ENCODE measurements at regions of chr12 and their contacts with region 1.

Region 1: DNA sequence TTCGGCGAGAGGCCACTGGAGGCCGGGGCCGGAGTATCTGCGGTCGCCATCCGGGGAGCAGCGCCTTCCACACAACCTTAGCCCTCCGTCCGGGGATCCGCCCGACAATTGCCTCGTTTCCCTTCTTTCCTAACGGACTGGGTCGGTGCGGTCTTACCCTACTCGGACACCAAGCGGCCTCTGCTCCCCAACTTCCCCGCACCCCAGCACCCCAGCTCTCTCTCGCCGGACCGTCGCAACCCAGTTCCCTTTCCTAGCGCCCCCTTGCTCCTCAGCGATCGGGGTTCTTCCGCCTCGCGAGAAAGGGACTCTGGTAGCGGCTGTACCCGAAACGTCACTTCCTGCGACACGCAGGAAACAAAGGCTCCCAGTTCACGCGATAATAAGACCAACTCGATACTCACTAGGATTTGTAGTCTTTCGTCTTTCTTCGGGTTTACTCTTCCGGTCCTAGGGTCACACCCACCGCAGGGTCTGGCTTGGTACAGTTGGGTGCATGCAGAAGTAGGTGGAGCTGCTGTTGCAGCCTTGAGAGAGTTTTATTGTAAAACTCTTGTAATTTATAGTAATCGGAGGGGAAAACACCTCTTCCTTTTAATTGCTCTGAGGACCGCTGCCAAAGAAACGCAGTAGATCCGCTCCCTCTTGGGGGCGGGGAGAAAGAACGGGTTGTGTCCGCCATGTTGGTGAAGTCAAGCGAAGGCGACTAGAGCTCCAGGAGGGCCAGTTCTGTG is at the start of gene ZFC3H1:
- DNase-seq: peak; percentile 80
- ATAC-seq: peak; percentile 83
- H3K4me3 Mint-ChIP-seq: peak within 1 kb of the TSS; percentile 98
- H3K27ac Mint-ChIP-seq: peak within 1 kb of the TSS; percentile 98
- H3K4me1 Mint-ChIP-seq: peaks cover 55% of the 10 kb centered on the region
- H3K27me3 Mint-ChIP-seq: no peaks in the 10 kb centered on the region
- CTCF ChIP-seq: no peak
- total RNA-seq, gene ZFC3H1: 85.7 and 107 TPM in 2 replicates

Region 2: DNA sequence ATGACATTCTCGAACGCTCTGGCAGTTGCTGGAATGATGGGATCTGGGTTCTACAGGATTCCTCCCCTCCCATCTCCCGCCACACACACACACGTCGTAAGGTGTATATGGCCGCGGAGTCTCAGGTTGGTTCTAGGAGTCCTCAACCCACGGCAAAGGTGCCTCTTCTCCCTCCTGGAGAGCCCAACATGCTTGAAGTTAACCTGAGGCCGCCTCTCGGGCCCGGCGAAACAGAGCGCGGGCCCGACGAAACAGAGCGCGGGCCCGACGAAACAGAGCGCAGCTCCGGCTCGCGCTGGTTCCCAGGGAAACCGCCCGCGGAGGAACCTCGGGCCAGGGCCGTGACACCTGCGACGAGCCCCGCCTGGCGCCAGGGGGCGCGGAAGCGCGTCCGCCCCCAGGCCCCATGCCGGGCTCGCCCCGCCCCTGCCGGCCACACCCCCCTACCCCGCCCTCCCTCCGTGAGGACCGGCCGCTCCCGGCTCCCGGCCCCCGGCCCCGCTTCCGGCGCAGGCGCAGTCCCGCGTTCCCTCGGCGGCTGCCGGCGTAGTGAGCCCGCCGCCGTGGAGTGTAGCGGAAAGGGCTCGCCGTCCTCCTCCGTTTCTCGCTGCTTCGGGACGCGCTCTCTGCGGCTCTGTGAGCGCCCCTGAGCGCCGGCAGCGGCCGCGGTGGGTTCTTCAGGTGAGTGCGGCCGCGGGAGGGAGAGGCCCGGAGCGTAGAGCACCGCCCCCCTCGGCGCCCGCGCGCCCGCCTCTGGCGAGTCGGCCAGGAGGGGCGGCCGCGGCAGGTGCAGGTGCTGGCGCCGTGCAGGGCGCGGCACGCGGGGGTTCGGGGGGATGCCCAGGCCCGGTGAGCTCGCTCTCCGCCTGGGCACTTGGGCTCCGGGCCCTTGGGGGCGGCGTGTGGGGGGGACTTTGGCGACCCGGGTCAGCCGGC is 1925.1 kb before region 1 on chr12 and contains the start of gene RAB3IP:
- CTCF ChIA-PET with region 1: no interaction called
- POLR2A ChIA-PET with region 1: no interaction called
- intact Hi-C with region 1: loop called (anchors 1 kb)
- DNase-seq: peak; percentile 93
- ATAC-seq: peak; percentile 90
- H3K4me3 Mint-ChIP-seq: peak within 1 kb of the TSS; percentile 85
- H3K27ac Mint-ChIP-seq: peak within 1 kb of the TSS; percentile 73
- H3K4me1 Mint-ChIP-seq: peaks cover 19% of the 10 kb centered on the region
- H3K27me3 Mint-ChIP-seq: peaks cover 4% of the 10 kb centered on the region
- CTCF ChIP-seq: no peak
- total RNA-seq, gene RAB3IP: 34.6 and 37.9 TPM in 2 replicates

Region 3: GRCh38 chr12:71183018-71183417 is 480.7 kb before region 1 on chr12:
- CTCF ChIA-PET with region 1: no interaction called
- POLR2A ChIA-PET with region 1: no interaction called
- intact Hi-C with region 1: no loop called
- DNase-seq: no peak
- ATAC-seq: no peak
- H3K4me3 Mint-ChIP-seq: no peak overlapping the region
- H3K27ac Mint-ChIP-seq: no peak overlapping the region
- H3K4me1 Mint-ChIP-seq: no peaks in the 10 kb centered on the region
- H3K27me3 Mint-ChIP-seq: no peaks in the 10 kb centered on the region
- CTCF ChIP-seq: no peak

Region 4: GRCh38 chr12:71636704-71637115 is 27.0 kb before region 1 on chr12:
- CTCF ChIA-PET with region 1: interaction called, 12 read pairs
- POLR2A ChIA-PET with region 1: interaction called, 9 read pairs
- intact Hi-C with region 1: loop called (anchors 2 kb)
- DNase-seq: no peak
- ATAC-seq: peak; percentile 57
- H3K4me3 Mint-ChIP-seq: no peak overlapping the region
- H3K27ac Mint-ChIP-seq: peak overlapping the region; percentile 19
- H3K4me1 Mint-ChIP-seq: peaks cover 5% of the 10 kb centered on the region
- H3K27me3 Mint-ChIP-seq: no peaks in the 10 kb centered on the region
- CTCF ChIP-seq: peak; percentile 66

Region 5: DNA sequence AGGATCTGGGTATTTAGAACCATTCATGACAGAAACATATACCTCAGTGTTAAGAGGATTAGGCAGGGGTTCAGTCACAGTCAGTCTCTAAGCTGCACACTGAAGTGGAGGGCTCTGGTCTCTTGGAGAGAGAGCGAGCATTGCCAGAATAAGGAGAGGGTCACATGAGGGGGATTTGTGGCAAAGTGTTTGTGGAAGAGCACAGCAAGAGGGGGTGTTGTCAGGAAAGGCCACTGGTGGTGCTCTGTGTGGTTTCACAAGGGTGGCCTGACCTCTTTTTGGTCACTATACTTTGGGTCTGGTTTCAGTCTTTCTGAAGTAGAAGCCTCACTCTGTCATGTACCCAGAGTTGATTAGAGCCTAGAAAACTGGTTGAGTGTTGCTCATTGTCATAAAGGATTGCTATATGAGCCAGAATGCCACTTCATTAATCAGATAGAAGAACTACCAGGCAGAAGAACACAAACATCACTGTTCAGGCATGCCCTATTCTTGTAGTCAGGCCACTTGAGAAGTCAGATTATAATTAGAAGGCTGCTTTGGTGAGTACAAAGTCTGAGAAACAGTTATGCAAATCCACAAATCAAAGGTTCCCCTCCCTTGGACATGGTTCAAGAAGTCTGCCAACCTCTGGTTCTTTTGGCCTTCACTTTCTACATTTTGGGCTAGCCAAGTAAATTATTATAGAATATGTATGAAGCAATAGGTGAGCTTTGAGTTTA is 30.5 kb after region 1 on chr12:
- CTCF ChIA-PET with region 1: interaction called, 52 read pairs
- POLR2A ChIA-PET with region 1: interaction called, 232 read pairs
- intact Hi-C with region 1: loop called (anchors 1 kb)
- DNase-seq: no peak
- ATAC-seq: peak; percentile 83
- H3K4me3 Mint-ChIP-seq: peak overlapping the region; percentile 76
- H3K27ac Mint-ChIP-seq: peak overlapping the region; percentile 97
- H3K4me1 Mint-ChIP-seq: peaks cover 77% of the 10 kb centered on the region
- H3K27me3 Mint-ChIP-seq: no peaks in the 10 kb centered on the region
- CTCF ChIP-seq: no peak

Region 6: GRCh38 chr12:71746983-71747611 is 83.4 kb after region 1 on chr12:
- CTCF ChIA-PET with region 1: interaction called, 53 read pairs
- POLR2A ChIA-PET with region 1: interaction called, 45 read pairs
- intact Hi-C with region 1: loop called (anchors 1 kb)
- DNase-seq: peak; percentile 23
- ATAC-seq: peak; percentile 98
- H3K4me3 Mint-ChIP-seq: no peak overlapping the region
- H3K27ac Mint-ChIP-seq: no peak overlapping the region
- H3K4me1 Mint-ChIP-seq: peaks cover 3% of the 10 kb centered on the region
- H3K27me3 Mint-ChIP-seq: peaks cover 5% of the 10 kb centered on the region
- CTCF ChIP-seq: peak; percentile 91

Region 7: GRCh38 chr12:71840231-71840847 is 176.6 kb after region 1 on chr12:
- CTCF ChIA-PET with region 1: interaction called, 3 read pairs
- POLR2A ChIA-PET with region 1: interaction called, 5 read pairs
- intact Hi-C with region 1: loop called (anchors 1 kb)
- DNase-seq: no peak
- ATAC-seq: peak; percentile 8
- H3K4me3 Mint-ChIP-seq: peak overlapping the region; percentile 94
- H3K27ac Mint-ChIP-seq: peak overlapping the region; percentile 96
- H3K4me1 Mint-ChIP-seq: peaks cover 34% of the 10 kb centered on the region
- H3K27me3 Mint-ChIP-seq: peaks cover 2% of the 10 kb centered on the region
- CTCF ChIP-seq: no peak

Measured in activated B cell treated with CpG ODN at 0.5 μM for 24 hours (primary cell).